ENCODE measurements at regions of chr15 and their contacts with region 1.

Region 1: DNA sequence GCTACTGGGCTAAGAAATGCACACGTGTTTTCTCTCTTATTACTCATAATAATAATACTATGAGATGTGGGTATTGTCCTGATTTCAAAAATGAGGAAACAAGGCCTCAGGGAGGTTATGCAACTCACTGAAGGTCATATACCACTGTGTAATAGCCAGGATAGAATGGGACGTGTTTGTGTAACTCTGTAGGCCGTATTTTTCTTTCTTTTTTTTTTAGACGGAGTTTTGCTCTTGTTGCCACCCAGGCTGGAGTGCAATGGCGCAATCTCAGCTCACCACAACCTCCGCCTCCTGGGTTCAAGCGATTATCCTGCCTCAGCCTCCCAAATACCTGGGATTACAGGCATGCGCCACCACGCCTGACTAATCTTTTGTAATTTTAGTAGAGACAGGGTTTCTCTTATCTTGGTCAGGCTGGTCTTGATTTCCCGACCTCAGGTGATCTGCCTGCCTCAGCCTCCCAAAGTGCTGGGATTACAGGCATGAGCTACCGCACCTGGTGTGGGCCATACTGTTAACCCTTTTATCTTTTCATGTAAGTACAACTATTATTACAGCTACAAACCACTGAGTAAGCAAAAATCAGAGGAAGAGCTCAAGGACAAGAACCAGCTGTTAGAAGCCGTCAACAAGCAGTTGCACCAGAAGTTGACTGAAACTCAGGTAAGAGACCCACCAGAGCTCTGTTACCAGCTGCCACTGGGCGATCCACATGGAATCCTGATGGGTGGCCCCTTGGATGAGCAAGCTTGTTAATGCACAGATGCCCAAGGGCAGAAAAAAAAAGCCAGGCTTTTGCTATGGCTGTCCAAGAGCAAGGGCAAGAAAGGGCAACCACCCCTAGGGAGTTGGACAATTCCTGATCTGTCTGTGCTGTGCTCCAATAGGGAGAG is 6.7 kb downstream of the KNSTRN start:
- H3K4me3 Mint-ChIP-seq: peak overlapping the region; percentile 26
- H3K27ac Mint-ChIP-seq: peak overlapping the region; percentile 80
- H3K4me1 Mint-ChIP-seq: peaks cover 40% of the 10 kb centered on the region
- H3K27me3 Mint-ChIP-seq: no peaks in the 10 kb centered on the region

Region 2: GRCh38 chr15:40405501-40406381 is 16.5 kb after region 1 on chr15 and contains the start of gene IVD:
- intact Hi-C with region 1: loop called (anchors 2 kb)
- H3K4me3 Mint-ChIP-seq: peak within 1 kb of the TSS; percentile 88
- H3K27ac Mint-ChIP-seq: peak within 1 kb of the TSS; percentile 86
- H3K4me1 Mint-ChIP-seq: peaks cover 31% of the 10 kb centered on the region
- H3K27me3 Mint-ChIP-seq: no peaks in the 10 kb centered on the region